CD4-positive, alpha-beta T cell (primary cell): ENCODE measurements at regions of chr12 and their contacts with region 1.

Region 1: DNA sequence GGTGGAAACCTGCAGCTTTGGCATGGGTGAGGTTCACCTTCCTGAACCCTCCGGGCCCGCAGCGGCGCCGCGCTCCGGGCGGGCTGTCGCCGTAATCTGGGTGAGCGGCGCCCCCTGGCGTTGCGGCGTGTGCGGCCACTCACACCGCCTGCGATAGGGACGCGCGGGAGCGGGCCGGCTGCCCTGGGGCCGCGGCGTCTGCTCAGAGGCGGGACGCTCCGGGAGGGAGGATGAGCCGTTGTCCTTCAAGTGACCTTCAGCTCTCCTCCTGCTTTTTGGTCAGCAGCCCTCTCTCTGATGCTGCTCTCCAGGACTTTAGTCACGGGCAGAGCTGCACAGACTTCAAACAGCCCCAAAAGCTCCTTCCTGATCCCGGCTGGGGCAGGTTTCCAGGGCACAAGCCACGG is 211.7 kb upstream of the FKBP4 start:
- DNase-seq: peak in 12 of 14 experiments; percentile 5 to 67 (median 16)
- ATAC-seq: peak; percentile 49
- H3K4me3 ChIP-seq: no peak overlapping the region
- H3K4me3 Mint-ChIP-seq: no peak overlapping the region
- H3K27ac ChIP-seq: no peak overlapping the region
- H3K27ac Mint-ChIP-seq: no peak overlapping the region
- H3K4me1 ChIP-seq: peaks cover 7% of the 10 kb centered on the region
- H3K4me1 Mint-ChIP-seq: peaks cover 4% of the 10 kb centered on the region
- H3K27me3 ChIP-seq: peaks cover 24 to 28% of the 10 kb centered on the region in 2 experiments
- H3K27me3 Mint-ChIP-seq: peaks cover 67% of the 10 kb centered on the region
- CTCF ChIP-seq: peak; percentile 68

Region 2: DNA sequence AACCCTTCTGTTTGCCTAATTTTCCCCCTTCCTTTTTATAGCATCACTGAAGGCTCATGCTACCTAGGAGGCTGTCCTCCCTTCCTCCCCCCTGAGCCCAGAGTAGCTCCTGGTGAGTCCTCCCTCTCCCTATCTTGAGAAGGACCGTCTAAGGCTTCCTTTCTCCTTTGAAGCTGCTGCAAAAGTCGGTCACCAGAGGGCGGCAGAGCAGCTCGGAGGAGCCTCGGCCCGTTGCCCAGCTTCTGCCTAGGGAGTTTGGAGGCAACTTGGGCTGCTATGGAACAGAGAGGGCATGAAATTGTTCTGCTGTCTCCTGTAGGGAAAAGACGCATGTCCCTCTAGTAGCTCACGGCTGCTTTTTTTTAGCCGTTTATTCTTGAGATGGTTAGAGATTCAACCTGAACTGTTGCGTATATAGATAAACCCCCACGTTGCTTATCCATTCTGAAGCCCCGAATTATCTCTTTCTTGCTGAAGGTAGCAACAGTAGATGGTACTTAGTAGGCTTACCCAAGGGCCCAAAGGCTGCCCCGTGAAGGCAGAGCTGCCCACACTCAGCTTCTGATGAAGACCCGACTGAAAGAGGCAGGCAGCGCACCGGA is 948.4 kb before region 1 on chr12:
- CTCF ChIA-PET with region 1: no interaction called
- POLR2A ChIA-PET with region 1: no interaction called
- intact Hi-C with region 1: loop called (anchors 5 to 10 kb)
- DNase-seq: peak; percentile 40 to 75 (median 54)
- ATAC-seq: peak; percentile 68
- H3K4me3 ChIP-seq: no peak overlapping the region
- H3K4me3 Mint-ChIP-seq: no peak overlapping the region
- H3K27ac ChIP-seq: no peak overlapping the region
- H3K27ac Mint-ChIP-seq: no peak overlapping the region
- H3K4me1 ChIP-seq: peaks cover 21% of the 10 kb centered on the region
- H3K4me1 Mint-ChIP-seq: peaks cover 20% of the 10 kb centered on the region
- H3K27me3 ChIP-seq: peaks cover 34 to 43% of the 10 kb centered on the region in 2 experiments
- H3K27me3 Mint-ChIP-seq: peaks cover 54% of the 10 kb centered on the region
- CTCF ChIP-seq: peak; percentile 61

Region 3: DNA sequence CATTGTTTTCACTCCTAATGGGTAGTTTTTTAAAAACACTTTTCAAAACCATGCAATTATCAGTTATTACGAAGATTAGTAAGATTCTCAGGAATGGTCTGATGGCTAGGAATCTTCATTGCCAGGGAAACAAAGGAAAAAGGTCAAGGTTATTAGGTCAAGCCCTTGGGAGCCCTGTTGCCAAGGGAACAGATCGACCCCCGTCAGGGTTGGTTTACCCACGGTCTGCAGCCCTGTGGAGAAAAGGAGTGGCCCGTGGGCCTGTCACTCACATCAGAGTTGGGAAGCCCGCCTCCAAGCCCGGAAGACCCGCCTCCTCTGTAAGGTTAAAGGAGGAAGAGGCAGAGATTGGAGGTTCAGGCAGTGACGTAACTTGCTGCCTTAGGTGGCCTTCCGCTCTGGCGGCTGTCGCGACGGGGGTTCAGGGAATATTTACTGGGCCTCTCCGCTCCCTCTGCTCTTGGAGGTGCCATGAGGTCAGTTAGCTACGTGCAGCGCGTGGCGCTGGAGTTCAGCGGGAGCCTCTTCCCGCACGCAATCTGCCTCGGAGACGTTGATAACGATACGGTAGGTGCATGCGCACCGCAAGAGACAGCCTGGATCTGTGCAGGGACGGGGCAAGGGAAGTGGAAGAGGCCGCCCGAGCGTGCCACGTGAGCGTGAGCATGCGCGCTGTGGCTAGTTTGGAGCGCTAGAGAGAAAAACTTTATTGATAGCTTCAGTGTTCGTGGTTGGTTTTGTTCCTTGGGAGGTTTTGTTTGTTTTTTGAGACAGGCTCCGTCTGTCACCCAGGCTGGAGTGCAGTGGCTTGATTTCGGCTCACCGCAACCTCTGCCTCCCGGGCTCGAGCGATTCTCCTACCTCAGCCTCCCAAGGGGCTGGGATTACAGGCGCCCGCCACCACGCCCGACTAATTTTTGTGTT is 229.5 kb after region 1 on chr12 and contains the start of gene ITFG2:
- CTCF ChIA-PET with region 1: no interaction called
- POLR2A ChIA-PET with region 1: no interaction called
- intact Hi-C with region 1: no loop called
- DNase-seq: peak; percentile 90 to 98 (median 94)
- ATAC-seq: peak; percentile 91
- H3K4me3 ChIP-seq: peak within 1 kb of the TSS; percentile 82
- H3K4me3 Mint-ChIP-seq: peak within 1 kb of the TSS; percentile 96
- H3K27ac ChIP-seq: peak within 1 kb of the TSS; percentile 91 to 93
- H3K27ac Mint-ChIP-seq: peak within 1 kb of the TSS; percentile 99
- H3K4me1 ChIP-seq: peaks cover 18% of the 10 kb centered on the region
- H3K4me1 Mint-ChIP-seq: peaks cover 37% of the 10 kb centered on the region
- H3K27me3 ChIP-seq: no peaks in the 10 kb centered on the region
- H3K27me3 Mint-ChIP-seq: no peaks in the 10 kb centered on the region
- CTCF ChIP-seq: no peak
- total RNA-seq, gene ITFG2: 61.3 to 68.5 TPM